ENCODE measurements at regions of chr1 and their contacts with region 1.

Region 1: GRCh38 chr1:115609021-115609420 is 32.7 kb upstream of the VANGL1 start:
- DNase-seq: no peak
- H3K4me3 ChIP-seq: no peak overlapping the region
- H3K4me1 ChIP-seq: peaks cover 2% of the 10 kb centered on the region; the same call in 1 of the 2 replicates
- H3K27me3 ChIP-seq: no peaks in the 10 kb centered on the region

Region 2: DNA sequence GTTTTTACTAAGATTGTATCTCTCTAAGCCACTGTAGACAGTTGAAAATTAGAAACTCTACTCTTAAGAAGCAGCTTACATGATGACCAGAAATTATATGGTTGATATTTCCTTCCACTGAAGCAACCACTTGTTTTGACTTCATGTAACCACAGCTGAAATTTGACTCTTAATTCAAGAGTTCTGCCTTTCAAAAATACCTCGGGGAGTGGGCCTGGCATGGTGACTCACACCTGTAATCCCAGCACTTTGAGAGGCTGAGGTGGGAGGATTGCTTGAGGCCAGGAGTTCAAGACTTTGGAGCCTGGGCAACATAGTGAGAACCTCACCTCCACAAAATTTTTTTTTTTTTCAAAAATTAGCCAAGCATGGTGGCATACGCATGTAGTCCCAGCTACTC is 918.0 kb before region 1 on chr1:
- in situ Hi-C with region 1: no loop called
- DNase-seq: no peak
- H3K4me3 ChIP-seq: no peak overlapping the region
- H3K4me1 ChIP-seq: peaks cover 3% of the 10 kb centered on the region; the same call in 1 of the 2 replicates
- H3K27me3 ChIP-seq: no peaks in the 10 kb centered on the region

Region 3: DNA sequence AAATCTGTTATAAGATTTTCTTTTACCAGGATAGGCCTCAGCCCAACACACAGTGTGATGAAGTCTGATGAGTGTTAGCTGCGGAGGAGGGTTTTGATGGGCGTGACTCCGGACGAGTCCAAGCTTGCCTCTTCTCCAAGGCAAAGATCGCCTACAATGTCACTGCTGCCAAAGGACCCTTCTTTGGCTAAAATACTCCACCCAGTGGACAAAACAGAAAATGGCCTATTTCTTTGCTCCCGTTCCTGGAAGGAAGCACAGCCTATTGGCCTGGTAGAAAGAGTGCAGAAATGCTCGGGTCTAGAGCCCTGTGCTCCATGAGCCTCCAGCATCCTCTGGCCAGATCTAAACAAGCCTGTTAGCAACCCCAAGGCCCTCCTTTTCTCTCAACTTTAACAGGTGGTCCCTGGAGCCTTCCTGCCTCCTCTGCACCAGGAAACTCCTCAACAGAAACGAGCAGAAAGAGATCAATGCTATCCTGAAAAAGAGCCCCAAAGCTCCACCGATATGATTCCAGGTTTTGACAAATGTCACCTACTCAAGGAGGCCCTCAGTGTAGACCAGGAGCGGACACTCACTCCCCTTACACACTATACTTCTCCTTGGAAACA is 162.9 kb after region 1 on chr1:
- in situ Hi-C with region 1: loop called (anchors 5 kb)
- DNase-seq: peak; percentile 83 to 90
- H3K4me3 ChIP-seq: no peak overlapping the region
- H3K4me1 ChIP-seq: peaks cover 4% of the 10 kb centered on the region
- H3K27me3 ChIP-seq: no peaks in the 10 kb centered on the region

Region 4: GRCh38 chr1:115980998-115981993 is 372.3 kb after region 1 on chr1:
- in situ Hi-C with region 1: loop called (anchors 10 kb)
- DNase-seq: peak; percentile 78 to 82
- H3K4me3 ChIP-seq: no peak overlapping the region
- H3K4me1 ChIP-seq: peaks cover 35% of the 10 kb centered on the region
- H3K27me3 ChIP-seq: no peaks in the 10 kb centered on the region